Aorta (tissue), 5 donors: ENCODE measurements at regions of chr9 and their contacts with region 1.

Region 1: GRCh38 chr9:35603987-35604577 is 980 bp upstream of the TESK1 start:
- DNase-seq: peak; percentile 100
- ATAC-seq: peak; percentile 98
- H3K4me3 ChIP-seq: peak overlapping the region; percentile 1 to 89
- H3K27ac ChIP-seq: peak overlapping the region; percentile 2 to 66
- H3K4me1 ChIP-seq: no peaks in the 10 kb centered on the region
- H3K27me3 ChIP-seq: no peaks in the 10 kb centered on the region

Region 2: GRCh38 chr9:35489313-35490154 is 114.5 kb before region 1 on chr9 and contains the start of gene RUSC2:
- intact Hi-C with region 1: loop called in 1 of 2 experiments (anchors 5 kb)
- DNase-seq: peak; percentile 93 to 96
- ATAC-seq: peak; percentile 92
- H3K4me3 ChIP-seq: peak within 1 kb of the TSS; percentile 83 to 87
- H3K27ac ChIP-seq: peak within 1 kb of the TSS; percentile 65 to 89
- H3K4me1 ChIP-seq: no peaks in the 10 kb centered on the region
- H3K27me3 ChIP-seq: no peaks in the 10 kb centered on the region
- total RNA-seq, gene RUSC2: 65.8 to 112 TPM

Region 3: DNA sequence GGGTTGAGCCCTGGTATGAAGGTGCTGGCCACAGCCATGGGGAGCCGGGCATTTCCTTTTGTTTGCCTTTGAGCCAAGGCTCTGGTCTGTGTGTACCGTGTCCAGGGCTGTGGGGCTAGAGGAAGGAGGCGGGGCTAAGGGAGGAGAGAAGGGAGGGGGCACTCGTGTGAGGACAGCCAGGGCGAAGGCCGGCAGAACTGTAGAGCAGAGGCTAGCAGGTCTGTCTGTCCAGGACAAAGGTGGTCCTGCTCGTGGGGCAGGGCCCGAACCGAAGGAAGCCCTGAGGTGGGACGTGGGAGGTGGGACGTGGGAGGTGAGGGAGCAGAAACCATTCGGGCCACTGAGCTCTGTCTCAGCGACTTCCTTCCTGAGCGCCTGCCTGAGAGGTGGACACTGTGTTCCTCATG is 40.3 kb before region 1 on chr9:
- intact Hi-C with region 1: loop called (anchors 2 to 5 kb)
- DNase-seq: peak; percentile 69 to 85
- ATAC-seq: peak; percentile 60
- H3K4me3 ChIP-seq: no peak overlapping the region
- H3K27ac ChIP-seq: peak overlapping the region; percentile 46 to 95
- H3K4me1 ChIP-seq: peaks cover 0 to 2% of the 10 kb centered on the region in 2 donors
- H3K27me3 ChIP-seq: no peaks in the 10 kb centered on the region

Region 4: GRCh38 chr9:35646533-35647265 is 42.6 kb after region 1 on chr9:
- intact Hi-C with region 1: loop called in 1 of 2 experiments (anchors 5 kb)
- DNase-seq: peak; percentile 97 to 98
- ATAC-seq: peak; percentile 97
- H3K4me3 ChIP-seq: peak overlapping the region; percentile 37 to 50
- H3K27ac ChIP-seq: peak overlapping the region; percentile 31 to 62
- H3K4me1 ChIP-seq: no peaks in the 10 kb centered on the region
- H3K27me3 ChIP-seq: no peaks in the 10 kb centered on the region

Region 5: GRCh38 chr9:35732122-35732799 is 128.2 kb after region 1 on chr9 and contains the starts of genes CREB3 and TLN1:
- intact Hi-C with region 1: loop called in 1 of 2 experiments (anchors 2 kb)
- DNase-seq: peak; percentile 99 to 100
- ATAC-seq: peak; percentile 94
- H3K4me3 ChIP-seq: peak within 1 kb of the TSS; percentile 65 to 97
- H3K27ac ChIP-seq: peak within 1 kb of the TSS; percentile 94 to 98
- H3K4me1 ChIP-seq: no peaks in the 10 kb centered on the region
- H3K27me3 ChIP-seq: no peaks in the 10 kb centered on the region
- total RNA-seq, gene CREB3: 39.5 to 51.3 TPM
- total RNA-seq, gene TLN1: 735 to 1,271 TPM